HepG2 (cell line): ENCODE measurements at regions of chr22 and their contacts with region 1.

Region 1: GRCh38 chr22:34800260-34800980 is 265.5 kb upstream of the ISX start:
- DNase-seq: no peak
- ATAC-seq: no peak
- H3K4me3 ChIP-seq: no peak overlapping the region
- H3K27ac ChIP-seq: no peak overlapping the region
- H3K4me1 ChIP-seq: no peaks in the 10 kb centered on the region
- H3K27me3 ChIP-seq: peaks cover 1 to 20% of the 10 kb centered on the region in 2 experiments; a peak in 2 of 5 replicates
- CTCF ChIP-seq: no peak
- EP300 ChIP-seq: no peak
- POLR2A ChIP-seq: no peak
- RAD21 ChIP-seq: no peak

Region 2: DNA sequence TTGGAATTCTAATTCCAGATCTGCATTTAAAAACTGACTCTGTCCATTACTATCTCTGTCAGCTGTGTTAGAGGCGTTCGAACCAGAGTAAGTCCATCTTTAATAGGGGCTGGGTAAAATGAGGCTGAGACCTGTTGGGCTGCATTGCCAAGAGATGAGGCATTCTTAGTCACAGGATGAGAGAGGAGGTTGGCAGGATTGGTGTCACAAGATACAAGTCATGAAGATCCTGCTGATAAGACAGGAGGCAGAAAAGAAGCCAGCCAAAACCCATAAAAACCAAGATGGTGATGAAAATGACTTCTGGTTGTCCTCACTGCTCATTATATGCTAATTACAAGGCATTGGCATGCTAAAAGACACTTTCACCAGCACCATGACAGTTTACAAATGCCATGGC is 90.8 kb before region 1 on chr22:
- CTCF ChIA-PET with region 1: no interaction called
- POLR2A ChIA-PET with region 1: no interaction called
- in situ Hi-C with region 1: loop called (anchors 25 kb)
- intact Hi-C with region 1: no loop called
- DNase-seq: no peak
- ATAC-seq: no peak
- H3K4me3 ChIP-seq: no peak overlapping the region
- H3K27ac ChIP-seq: no peak overlapping the region
- H3K4me1 ChIP-seq: no peaks in the 10 kb centered on the region
- H3K27me3 ChIP-seq: no peaks in the 10 kb centered on the region; a peak in 1 of 5 replicates
- CTCF ChIP-seq: no peak
- EP300 ChIP-seq: no peak
- POLR2A ChIP-seq: no peak
- RAD21 ChIP-seq: no peak

Region 3: DNA sequence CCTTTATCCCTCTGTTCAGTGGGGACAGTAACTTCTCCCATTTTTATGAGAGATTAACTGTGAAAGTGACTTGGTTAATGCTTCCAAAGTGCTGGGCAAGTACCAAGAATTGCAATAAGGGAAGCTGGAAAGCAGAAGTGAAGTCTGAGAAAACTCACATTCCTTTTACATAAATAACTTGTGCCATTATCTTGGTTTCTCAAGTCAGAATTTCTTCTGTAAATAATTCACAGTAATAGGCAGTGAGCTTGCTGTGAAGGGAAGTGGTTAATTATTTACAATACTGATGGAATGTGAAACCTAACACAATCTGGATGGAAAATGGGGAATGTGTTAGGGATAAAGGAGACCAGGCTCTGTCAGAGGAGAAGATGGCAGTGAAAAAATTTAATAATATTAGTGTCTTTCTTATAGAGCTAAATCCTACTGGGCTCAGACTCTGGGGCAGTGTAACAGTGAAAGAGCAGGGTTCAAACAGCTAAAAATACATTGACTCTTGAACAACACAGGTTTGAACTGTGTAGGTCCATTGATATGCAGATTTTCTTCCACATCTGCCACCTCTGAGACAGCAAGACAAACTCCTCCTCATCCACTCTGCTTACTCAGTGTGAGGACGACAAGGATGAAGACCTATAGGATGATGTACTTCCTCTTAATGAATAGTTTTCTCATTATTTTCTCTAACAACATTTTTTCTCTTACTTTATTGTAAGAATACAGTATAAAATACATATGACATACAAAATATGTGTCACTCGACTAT is 14.0 kb after region 1 on chr22:
- CTCF ChIA-PET with region 1: no interaction called
- POLR2A ChIA-PET with region 1: no interaction called
- in situ Hi-C with region 1: no loop called
- intact Hi-C with region 1: no loop called
- DNase-seq: peak; percentile 10
- ATAC-seq: 0 out of 3 replicates have a peak, but pooled peaks have one; percentile 36
- H3K4me3 ChIP-seq: no peak overlapping the region
- H3K27ac ChIP-seq: no peak overlapping the region
- H3K4me1 ChIP-seq: peaks cover 6% of the 10 kb centered on the region; the same call in 1 of the 2 replicates
- H3K27me3 ChIP-seq: no peaks in the 10 kb centered on the region
- CTCF ChIP-seq: no peak
- EP300 ChIP-seq: no peak
- POLR2A ChIP-seq: no peak
- RAD21 ChIP-seq: no peak

Region 4: DNA sequence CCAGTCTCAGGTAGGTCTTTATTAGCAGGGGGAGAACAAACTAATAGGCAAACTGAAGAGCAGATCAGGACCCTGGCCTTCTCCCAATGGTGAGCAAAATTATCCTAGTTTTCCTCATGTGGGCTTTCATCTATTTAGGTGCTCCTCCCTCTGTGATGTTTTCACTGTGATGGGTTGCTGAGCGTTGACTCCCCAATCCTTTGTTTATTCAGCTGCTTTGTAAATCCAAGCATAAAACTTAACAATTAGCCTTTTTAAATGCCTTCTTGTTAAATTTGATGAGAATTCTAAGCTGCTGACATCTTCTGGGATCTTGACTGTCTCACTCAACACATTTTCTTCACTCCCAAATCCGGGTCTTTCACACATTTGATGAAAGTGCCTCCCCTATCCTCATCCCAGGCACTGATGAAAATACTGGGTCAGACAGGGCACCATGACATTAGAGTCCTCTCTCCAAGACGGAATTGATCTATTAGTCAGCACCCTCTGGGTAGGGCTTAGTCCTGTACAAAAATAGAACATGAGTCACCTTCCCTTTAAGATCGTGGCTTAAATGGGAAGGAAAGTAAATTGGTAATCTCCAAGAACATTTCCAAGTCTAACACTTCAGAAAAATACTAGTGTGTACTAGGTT is 66.2 kb after region 1 on chr22:
- CTCF ChIA-PET with region 1: no interaction called
- POLR2A ChIA-PET with region 1: no interaction called
- in situ Hi-C with region 1: loop called (anchors 10 kb)
- intact Hi-C with region 1: no loop called
- DNase-seq: no peak
- ATAC-seq: no peak
- H3K4me3 ChIP-seq: no peak overlapping the region
- H3K27ac ChIP-seq: no peak overlapping the region
- H3K4me1 ChIP-seq: no peaks in the 10 kb centered on the region
- H3K27me3 ChIP-seq: no peaks in the 10 kb centered on the region; a peak in 1 of 5 replicates
- CTCF ChIP-seq: no peak
- EP300 ChIP-seq: no peak
- POLR2A ChIP-seq: no peak
- RAD21 ChIP-seq: no peak